Stomach (tissue), 19 donors: ENCODE measurements at regions of chr18 and their contacts with region 1.

Region 1: GRCh38 chr18:72762515-72763122 is 105.2 kb downstream of the NETO1 start:
- DNase-seq: peak in 1 of 2 donors; percentile 78
- H3K4me3 ChIP-seq: no peak overlapping the region
- H3K27ac ChIP-seq: no peak overlapping the region
- H3K4me1 ChIP-seq: no peaks in the 10 kb centered on the region
- H3K27me3 ChIP-seq: peaks cover 0 to 5% (median 0%) of the 10 kb centered on the region in 3 donors
- CTCF ChIP-seq: peak in 5 of 7 experiments; percentile 24 to 72 (median 60)
- EP300 ChIP-seq: no peak
- POLR2A ChIP-seq: no peak

Region 2: GRCh38 chr18:73848656-73849055 is 1086.0 kb after region 1 on chr18:
- intact Hi-C with region 1: loop called (anchors 5 kb)
- DNase-seq: no peak
- H3K4me3 ChIP-seq: no peak overlapping the region
- H3K27ac ChIP-seq: no peak overlapping the region
- H3K4me1 ChIP-seq: no peaks in the 10 kb centered on the region
- H3K27me3 ChIP-seq: peaks cover 0 to 21% (median 0%) of the 10 kb centered on the region in 3 donors
- CTCF ChIP-seq: no peak
- EP300 ChIP-seq: no peak
- POLR2A ChIP-seq: no peak